ENCODE measurements at regions of chr17 and their contacts with region 1.

Region 1: GRCh38 chr17:39484178-39484577 is 22.9 kb downstream of the CDK12 start:
- DNase-seq: no peak
- H3K4me3 ChIP-seq: no peak overlapping the region
- H3K27ac ChIP-seq: no peak overlapping the region
- H3K4me1 ChIP-seq: no peaks in the 10 kb centered on the region
- H3K27me3 ChIP-seq: no peaks in the 10 kb centered on the region
- CTCF ChIP-seq: no peak
- POLR2A ChIP-seq: no peak

Region 2: DNA sequence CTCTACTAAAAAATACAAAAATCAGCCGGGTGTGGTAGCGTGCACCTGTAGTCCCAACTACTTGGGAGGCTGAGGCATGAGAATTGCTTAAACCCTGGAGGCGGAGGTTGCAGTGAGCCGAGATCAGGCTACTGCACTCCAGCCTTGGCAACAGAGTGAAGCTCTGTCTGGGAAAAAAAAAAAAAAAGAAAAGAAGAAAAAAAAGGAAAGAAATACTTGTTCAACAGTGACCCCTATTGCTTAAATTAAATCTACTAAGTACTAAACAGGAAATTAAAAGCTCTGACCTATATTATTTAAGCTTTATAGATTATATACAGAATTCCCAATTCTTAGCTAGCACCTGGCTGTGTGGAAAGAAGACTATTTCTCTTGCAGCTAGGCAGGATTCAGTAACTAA is 131.7 kb before region 1 on chr17:
- CTCF ChIA-PET with region 1: no interaction called
- POLR2A ChIA-PET with region 1: interaction called, 14 read pairs
- dilution Hi-C with region 1: no loop called
- intact Hi-C with region 1: no loop called
- DNase-seq: peak; percentile 21
- H3K4me3 ChIP-seq: no peak overlapping the region
- H3K27ac ChIP-seq: no peak overlapping the region
- H3K4me1 ChIP-seq: peaks cover 14% of the 10 kb centered on the region
- H3K27me3 ChIP-seq: no peaks in the 10 kb centered on the region
- CTCF ChIP-seq: no peak
- POLR2A ChIP-seq: no peak

Region 3: DNA sequence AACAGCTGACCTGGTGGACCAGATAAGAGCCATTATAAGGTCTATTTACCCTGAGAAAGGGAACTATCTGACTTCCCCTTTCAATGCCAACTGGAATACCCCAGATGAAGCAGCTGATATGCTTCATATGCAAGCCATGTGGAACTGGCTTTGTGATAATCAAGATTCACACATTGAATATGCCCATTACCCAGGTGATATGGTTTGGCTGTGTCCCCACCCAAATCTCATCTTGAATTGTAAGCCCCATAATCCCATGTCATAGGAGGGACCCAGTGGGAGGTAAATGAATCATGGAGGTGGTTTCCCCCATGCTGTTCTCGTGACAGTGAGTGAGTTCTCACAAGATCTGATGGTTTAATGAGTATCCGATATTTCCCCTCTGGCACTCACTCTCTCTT is 337.9 kb after region 1 on chr17:
- CTCF ChIA-PET with region 1: no interaction called
- POLR2A ChIA-PET with region 1: no interaction called
- dilution Hi-C with region 1: no loop called
- intact Hi-C with region 1: loop called (anchors 5 kb)
- DNase-seq: no peak
- H3K4me3 ChIP-seq: no peak overlapping the region
- H3K27ac ChIP-seq: no peak overlapping the region
- H3K4me1 ChIP-seq: no peaks in the 10 kb centered on the region
- H3K27me3 ChIP-seq: peaks cover 2 to 8% of the 10 kb centered on the region in 2 experiments
- CTCF ChIP-seq: no peak
- POLR2A ChIP-seq: no peak

Measured in endothelial cell of umbilical vein (primary cell).